A673 (cell line): ENCODE measurements at regions of chr5 and their contacts with region 1.

Region 1: GRCh38 chr5:37412515-37413277 is 33.6 kb downstream of the WDR70 start:
- DNase-seq: peak; percentile 91
- H3K4me3 ChIP-seq: no peak overlapping the region
- H3K27ac ChIP-seq: no peak overlapping the region
- H3K4me1 ChIP-seq: peaks cover 6% of the 10 kb centered on the region
- H3K27me3 ChIP-seq: no peaks in the 10 kb centered on the region
- CTCF ChIP-seq: peak; percentile 98

Region 2: GRCh38 chr5:37326536-37326935 is 86.2 kb before region 1 on chr5:
- CTCF ChIA-PET with region 1: no interaction called
- POLR2A ChIA-PET with region 1: no interaction called
- intact Hi-C with region 1: no loop called
- DNase-seq: no peak
- H3K4me3 ChIP-seq: no peak overlapping the region
- H3K27ac ChIP-seq: no peak overlapping the region
- H3K4me1 ChIP-seq: no peaks in the 10 kb centered on the region
- H3K27me3 ChIP-seq: no peaks in the 10 kb centered on the region
- CTCF ChIP-seq: no peak

Region 3: DNA sequence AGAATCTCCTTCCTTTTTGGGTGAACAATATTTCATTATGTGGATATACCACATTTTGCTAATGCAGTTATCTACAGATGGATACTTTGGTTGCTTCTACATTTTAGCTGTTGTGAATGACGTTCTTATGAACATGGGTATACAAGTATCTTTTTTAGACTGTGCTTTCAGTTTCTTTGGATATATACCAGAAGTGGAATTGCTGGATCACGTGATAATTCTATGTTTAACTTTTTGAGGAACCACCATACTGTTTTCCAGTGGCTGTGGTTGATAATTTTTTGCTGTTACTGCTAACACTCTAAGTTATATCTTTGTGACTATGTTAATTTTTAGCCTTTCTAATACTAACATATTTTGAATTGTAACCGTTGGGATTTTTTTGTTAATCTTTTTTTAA is 21.1 kb before region 1 on chr5:
- CTCF ChIA-PET with region 1: no interaction called
- POLR2A ChIA-PET with region 1: no interaction called
- intact Hi-C with region 1: no loop called
- DNase-seq: no peak
- H3K4me3 ChIP-seq: no peak overlapping the region
- H3K27ac ChIP-seq: no peak overlapping the region
- H3K4me1 ChIP-seq: no peaks in the 10 kb centered on the region
- H3K27me3 ChIP-seq: no peaks in the 10 kb centered on the region
- CTCF ChIP-seq: no peak

Region 4: GRCh38 chr5:37520811-37521210 is 108.1 kb after region 1 on chr5:
- CTCF ChIA-PET with region 1: no interaction called
- POLR2A ChIA-PET with region 1: no interaction called
- intact Hi-C with region 1: no loop called
- DNase-seq: no peak
- H3K4me3 ChIP-seq: no peak overlapping the region
- H3K27ac ChIP-seq: no peak overlapping the region
- H3K4me1 ChIP-seq: no peaks in the 10 kb centered on the region
- H3K27me3 ChIP-seq: no peaks in the 10 kb centered on the region
- CTCF ChIP-seq: no peak

Region 5: DNA sequence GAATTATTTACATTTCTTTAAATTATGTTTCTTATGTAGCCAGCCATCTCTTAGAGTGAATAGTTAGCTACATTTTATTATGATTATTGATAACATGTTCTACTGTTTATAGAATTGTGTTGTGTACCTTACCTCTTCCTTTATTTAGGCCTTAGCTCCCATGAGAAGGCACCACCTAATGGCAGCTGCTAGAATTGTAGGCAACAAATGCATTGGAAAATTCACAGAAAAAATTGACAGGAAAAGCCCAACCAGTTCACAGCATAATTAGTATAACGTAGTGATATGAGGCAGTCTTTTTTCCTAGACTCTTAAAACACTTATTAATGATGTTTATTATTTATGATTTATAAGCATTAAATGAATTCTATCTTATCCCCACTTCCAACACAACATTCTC is 142.2 kb after region 1 on chr5:
- CTCF ChIA-PET with region 1: interaction called, 3 read pairs
- POLR2A ChIA-PET with region 1: no interaction called
- intact Hi-C with region 1: loop called (anchors 5 kb)
- DNase-seq: no peak
- H3K4me3 ChIP-seq: no peak overlapping the region
- H3K27ac ChIP-seq: peak overlapping the region; percentile 95
- H3K4me1 ChIP-seq: peaks cover 26% of the 10 kb centered on the region
- H3K27me3 ChIP-seq: no peaks in the 10 kb centered on the region
- CTCF ChIP-seq: peak; percentile 48

Region 6: DNA sequence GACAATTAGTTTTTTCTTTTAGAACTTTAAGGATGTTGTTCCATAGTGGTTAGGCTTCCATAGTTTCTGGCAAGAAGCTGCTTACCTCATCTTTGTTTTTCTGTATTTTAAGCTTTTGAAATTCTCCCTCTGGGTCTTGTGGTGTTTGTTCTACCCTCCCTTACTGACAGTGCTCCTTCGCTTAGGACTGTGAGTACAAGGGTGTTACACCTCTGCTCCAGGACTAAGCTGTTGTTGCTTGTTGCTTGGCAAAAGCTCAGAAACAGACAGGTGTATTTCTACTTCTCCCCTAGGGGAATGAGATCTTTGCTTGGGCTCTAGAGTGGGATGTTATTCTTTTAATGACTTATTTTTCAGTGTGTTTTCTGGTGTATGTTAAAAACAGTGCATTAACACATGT is 191.6 kb after region 1 on chr5:
- CTCF ChIA-PET with region 1: no interaction called
- POLR2A ChIA-PET with region 1: no interaction called
- intact Hi-C with region 1: no loop called
- DNase-seq: no peak
- H3K4me3 ChIP-seq: no peak overlapping the region
- H3K27ac ChIP-seq: no peak overlapping the region
- H3K4me1 ChIP-seq: no peaks in the 10 kb centered on the region
- H3K27me3 ChIP-seq: no peaks in the 10 kb centered on the region
- CTCF ChIP-seq: no peak

Region 7: DNA sequence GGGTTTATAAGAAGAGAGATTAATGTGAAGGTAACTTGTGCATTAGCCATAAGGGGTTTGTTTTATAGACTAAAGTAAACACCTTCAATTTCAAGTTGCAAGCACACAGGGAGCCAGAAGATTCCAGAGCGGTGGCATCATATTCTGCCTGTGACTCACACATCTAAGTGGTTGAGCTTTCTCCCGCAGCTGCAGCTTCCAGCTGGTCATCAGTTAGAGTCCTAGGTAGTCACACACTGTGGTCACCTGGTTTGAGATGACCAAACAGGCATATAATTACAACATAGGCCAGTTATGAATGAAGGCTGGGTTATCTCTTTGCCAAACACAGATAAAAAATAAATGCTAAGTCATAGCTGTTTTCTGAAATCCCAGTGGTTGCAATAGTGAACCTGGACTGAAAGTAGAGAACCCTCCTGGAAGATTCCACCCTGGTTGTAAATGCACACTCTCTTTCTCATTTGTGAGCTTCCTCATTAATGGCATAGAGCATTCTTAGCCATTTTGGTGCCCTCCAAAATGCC is 255.9 kb after region 1 on chr5:
- CTCF ChIA-PET with region 1: no interaction called
- POLR2A ChIA-PET with region 1: no interaction called
- intact Hi-C with region 1: loop called (anchors 10 kb)
- DNase-seq: peak; percentile 72
- H3K4me3 ChIP-seq: no peak overlapping the region
- H3K27ac ChIP-seq: no peak overlapping the region
- H3K4me1 ChIP-seq: peaks cover 29% of the 10 kb centered on the region
- H3K27me3 ChIP-seq: no peaks in the 10 kb centered on the region
- CTCF ChIP-seq: no peak

Region 8: GRCh38 chr5:37757980-37758583 is 345.4 kb after region 1 on chr5:
- CTCF ChIA-PET with region 1: interaction called, 4 read pairs
- POLR2A ChIA-PET with region 1: no interaction called
- intact Hi-C with region 1: loop called (anchors 2 kb)
- DNase-seq: peak; percentile 66
- H3K4me3 ChIP-seq: no peak overlapping the region
- H3K27ac ChIP-seq: no peak overlapping the region
- H3K4me1 ChIP-seq: peaks cover 3% of the 10 kb centered on the region
- H3K27me3 ChIP-seq: no peaks in the 10 kb centered on the region
- CTCF ChIP-seq: peak; percentile 55

Region 9: DNA sequence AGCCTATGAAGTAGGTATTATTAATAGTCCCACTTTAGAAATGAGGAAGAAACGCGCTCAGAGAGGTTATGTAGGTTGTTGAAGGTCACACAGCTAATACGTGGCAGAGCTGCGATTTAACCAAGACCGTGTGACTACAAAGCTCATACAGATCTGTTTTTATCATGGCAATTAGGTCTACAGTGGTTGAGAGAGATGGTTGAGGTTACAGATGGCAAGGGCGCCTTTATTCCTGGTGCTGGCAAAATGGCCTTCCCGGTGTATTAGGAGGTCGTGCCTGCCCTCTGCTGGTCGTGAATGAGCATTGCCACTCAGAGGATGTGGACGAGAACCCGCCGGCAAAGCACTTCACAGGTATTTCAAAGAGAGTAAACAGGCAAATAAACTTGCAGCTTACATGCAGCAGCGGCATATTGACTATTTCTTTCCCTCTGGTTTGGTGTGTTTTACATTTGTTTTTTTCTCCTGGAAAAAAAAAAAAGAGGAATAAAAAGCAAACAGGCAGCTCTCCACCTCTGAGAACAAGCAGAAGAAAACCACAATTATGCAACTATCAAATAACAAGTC is 780.4 kb after region 1 on chr5:
- CTCF ChIA-PET with region 1: interaction called, 13 read pairs
- POLR2A ChIA-PET with region 1: no interaction called
- intact Hi-C with region 1: loop called (anchors 2 kb)
- DNase-seq: peak; percentile 81
- H3K4me3 ChIP-seq: no peak overlapping the region
- H3K27ac ChIP-seq: no peak overlapping the region
- H3K4me1 ChIP-seq: no peaks in the 10 kb centered on the region
- H3K27me3 ChIP-seq: no peaks in the 10 kb centered on the region
- CTCF ChIP-seq: peak; percentile 94